ENCODE measurements at regions of chr2 and their contacts with region 1.

Region 1: DNA sequence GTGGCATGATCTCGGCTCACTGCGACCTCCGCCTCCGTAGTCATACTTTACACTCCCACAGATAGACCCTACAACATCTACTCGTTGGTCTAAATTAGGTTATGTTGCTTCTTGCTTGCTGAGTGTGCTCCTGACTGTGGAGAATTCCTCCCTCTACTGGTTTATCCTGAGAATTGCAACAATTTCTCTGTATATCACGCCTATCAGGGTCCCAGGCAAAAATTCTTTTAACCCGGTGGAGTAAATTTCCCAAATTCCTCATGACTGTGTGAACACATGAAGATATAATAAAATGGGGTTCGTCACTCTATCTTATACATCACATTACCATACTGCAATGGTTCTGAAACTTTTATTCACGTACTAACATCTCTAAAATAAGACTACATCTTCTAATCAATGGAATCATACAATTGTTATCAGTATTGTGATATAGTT is 156.7 kb downstream of the EVA1A start:
- DNase-seq: peak; percentile 48
- H3K4me3 ChIP-seq: no peak overlapping the region
- CTCF ChIP-seq: peak; percentile 68

Region 2: GRCh38 chr2:74944987-74945787 is 458.8 kb before region 1 on chr2:
- in situ Hi-C with region 1: loop called (anchors 25 kb)
- DNase-seq: no peak
- H3K4me3 ChIP-seq: no peak overlapping the region
- CTCF ChIP-seq: no peak

Region 3: GRCh38 chr2:75303236-75303635 is 100.8 kb before region 1 on chr2:
- in situ Hi-C with region 1: no loop called
- DNase-seq: no peak
- H3K4me3 ChIP-seq: no peak overlapping the region
- CTCF ChIP-seq: no peak